AG04449 (cell line): ENCODE measurements at regions of chr10 and their contacts with region 1.

Region 1: DNA sequence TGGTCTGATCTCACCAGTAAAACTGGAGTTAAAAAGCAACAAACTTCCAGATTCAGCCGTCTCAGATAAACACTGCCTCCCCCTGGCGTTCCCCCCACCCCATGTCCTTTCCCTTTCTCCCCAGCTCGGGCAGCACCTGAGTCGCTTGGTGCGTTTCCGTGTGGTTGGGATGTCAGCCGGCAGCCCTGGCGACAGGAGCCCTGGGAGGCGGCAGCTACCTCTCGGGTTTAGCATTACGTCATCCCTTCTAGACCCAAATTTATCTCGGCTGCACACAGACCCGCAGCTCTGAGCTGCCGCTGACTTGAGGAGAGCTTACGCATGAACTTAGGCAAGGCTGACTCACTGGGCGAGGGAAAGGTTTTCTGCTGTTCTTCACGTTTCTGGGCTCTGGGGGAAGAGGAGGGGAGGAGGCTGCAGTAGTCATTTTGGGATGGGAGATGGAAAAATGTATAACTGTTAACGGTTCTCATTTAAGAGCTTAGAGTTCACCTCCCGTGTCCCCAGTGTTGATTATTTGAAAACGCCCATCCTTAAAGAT is 14.4 kb downstream of the MXI1 start:
- DNase-seq: peak; percentile 85
- H3K4me3 ChIP-seq: peak overlapping the region; percentile 61
- CTCF ChIP-seq: peak; percentile 36

Region 2: DNA sequence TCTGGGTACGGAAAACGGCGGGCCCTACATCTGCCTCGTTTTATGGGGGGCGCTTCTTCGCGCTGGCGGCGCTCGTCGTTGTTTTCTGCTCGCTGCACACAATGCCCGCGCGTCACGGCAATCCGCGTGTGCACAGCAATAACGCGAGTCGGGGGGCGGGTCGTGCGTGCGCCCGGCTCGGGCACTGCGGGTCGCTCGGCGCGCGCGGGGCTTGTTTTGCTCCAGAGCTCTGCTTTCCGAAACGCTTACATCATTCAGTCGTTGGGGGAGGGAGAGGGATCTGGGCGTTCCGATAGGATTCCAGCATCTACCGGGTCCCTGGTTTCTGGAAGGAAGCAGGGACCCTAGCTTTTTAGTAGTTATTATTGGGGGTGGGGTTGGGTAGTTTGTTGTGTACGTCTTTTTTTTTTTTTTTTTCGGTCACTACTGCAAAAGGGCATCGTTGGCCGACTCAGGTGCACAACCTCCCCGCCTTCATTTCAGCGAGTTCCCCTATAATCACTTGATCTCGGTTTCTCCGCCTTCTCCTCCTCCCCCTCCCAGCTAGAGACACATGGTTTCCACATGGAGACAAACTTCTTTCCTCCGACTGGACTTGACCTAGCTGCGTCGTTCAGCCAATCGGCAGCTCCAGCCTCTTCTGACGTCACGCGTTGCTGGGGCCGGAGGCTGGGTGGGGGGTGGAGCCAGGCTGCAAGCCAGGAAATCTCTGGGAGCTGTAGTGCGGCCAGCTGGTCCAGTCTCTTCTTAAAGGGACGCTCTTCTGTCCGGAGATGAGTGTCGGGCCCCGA is 10.9 kb before region 1 on chr10:
- CTCF ChIA-PET with region 1: interaction called, 26 read pairs
- POLR2A ChIA-PET with region 1: interaction called, 7 read pairs
- DNase-seq: peak; percentile 92
- H3K4me3 ChIP-seq: peak overlapping the region; percentile 80
- CTCF ChIP-seq: no peak

Region 3: GRCh38 chr10:110567201-110568054 is 345.6 kb after region 1 on chr10 and contains the start of gene SMC3:
- CTCF ChIA-PET with region 1: no interaction called
- POLR2A ChIA-PET with region 1: no interaction called
- DNase-seq: peak; percentile 75
- H3K4me3 ChIP-seq: peak within 1 kb of the TSS; percentile 84
- CTCF ChIP-seq: no peak